ENCODE measurements at regions of chr5 and their contacts with region 1.

Region 1: DNA sequence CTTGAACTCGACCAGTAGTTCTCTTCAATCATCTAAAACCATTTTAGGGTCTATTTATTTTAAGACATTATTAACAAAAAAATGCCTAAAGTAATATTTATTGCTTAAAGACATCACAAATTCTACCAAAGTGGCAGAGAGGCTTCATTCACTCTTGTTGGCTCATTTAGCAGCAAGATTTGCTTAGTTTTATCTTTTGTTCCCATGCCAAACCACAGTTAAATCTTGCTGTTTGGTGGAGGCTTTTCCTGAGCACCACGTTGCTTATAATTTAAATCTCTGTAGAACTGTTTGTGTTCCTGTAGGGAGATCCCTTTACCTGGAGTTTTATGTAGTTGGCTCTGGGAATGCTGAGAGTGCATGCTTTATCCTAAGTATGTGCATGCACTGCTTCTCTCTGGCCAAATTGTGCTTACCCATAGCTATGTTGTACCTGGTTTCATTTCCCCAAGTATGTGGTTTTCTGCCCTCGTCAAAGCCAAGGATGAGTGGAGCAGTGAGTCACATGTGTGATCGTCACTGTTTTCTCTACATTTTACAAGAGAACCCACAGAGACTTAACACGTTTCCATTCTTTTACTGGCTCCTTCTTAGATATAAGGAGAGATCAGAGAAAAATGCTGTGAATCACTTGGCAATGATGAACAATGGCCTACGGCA is 42.1 kb upstream of the MAST4 start:
- DNase-seq: peak; percentile 40
- ATAC-seq: peak; percentile 93
- H3K4me3 Mint-ChIP-seq: peak overlapping the region; percentile 63
- H3K27ac Mint-ChIP-seq: peak overlapping the region; percentile 91
- H3K4me1 Mint-ChIP-seq: peaks cover 42% of the 10 kb centered on the region
- H3K27me3 Mint-ChIP-seq: no peaks in the 10 kb centered on the region
- CTCF ChIP-seq: no peak

Region 2: GRCh38 chr5:66518716-66519171 is 35.3 kb before region 1 on chr5:
- CTCF ChIA-PET with region 1: interaction called, 3 read pairs
- POLR2A ChIA-PET with region 1: interaction called, 8 read pairs
- intact Hi-C with region 1: loop called (anchors 1 kb)
- DNase-seq: no peak
- ATAC-seq: no peak
- H3K4me3 Mint-ChIP-seq: no peak overlapping the region
- H3K27ac Mint-ChIP-seq: no peak overlapping the region
- H3K4me1 Mint-ChIP-seq: peaks cover 39% of the 10 kb centered on the region
- H3K27me3 Mint-ChIP-seq: no peaks in the 10 kb centered on the region
- CTCF ChIP-seq: no peak

Region 3: DNA sequence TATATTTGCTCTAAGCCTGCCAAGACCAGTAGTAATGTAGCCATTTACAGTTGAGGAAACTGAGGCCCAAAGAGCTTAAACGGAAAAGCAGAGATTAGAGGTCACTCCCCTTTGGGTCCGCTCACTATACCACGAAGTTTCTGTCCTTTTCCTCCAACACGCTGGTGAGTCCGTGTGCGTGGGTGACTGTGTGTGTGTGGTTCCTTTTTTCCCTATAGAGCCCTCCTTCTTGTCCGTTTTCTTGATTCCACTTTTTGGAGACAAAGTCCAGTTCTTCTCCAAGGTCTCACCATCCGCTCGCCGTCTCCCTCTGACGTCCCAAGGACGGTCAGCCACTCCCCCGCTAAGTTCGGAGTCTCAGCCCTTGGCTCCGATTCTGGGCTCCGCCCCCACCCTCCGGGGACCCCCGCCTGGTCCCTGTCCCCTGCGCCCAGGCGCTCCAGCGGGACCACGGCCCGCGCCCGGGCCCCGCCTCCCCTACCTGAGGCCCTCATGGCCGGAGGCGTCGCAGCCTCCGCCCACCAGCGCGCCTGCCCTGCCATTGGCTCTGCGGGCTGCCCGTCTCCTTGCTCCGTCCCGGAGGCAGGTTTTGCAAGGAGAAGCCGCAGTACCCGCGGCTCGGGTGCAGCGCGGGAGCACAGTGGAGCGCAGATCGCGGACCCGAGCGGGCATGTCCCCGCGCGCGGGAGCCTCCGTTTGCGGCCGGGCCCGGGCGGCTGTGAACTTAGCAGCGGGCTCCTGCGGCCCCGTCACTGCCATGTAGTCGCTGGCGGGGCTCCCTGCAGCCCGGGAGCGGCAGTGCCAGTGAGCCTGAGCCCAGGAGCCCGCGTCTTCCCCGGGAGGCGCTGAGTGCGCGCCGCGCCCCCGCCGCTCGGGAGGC is 42.0 kb after region 1 on chr5 and contains the start of gene MAST4:
- CTCF ChIA-PET with region 1: no interaction called
- POLR2A ChIA-PET with region 1: no interaction called
- intact Hi-C with region 1: loop called (anchors 2 kb)
- DNase-seq: peak; percentile 79
- ATAC-seq: peak; percentile 96
- H3K4me3 Mint-ChIP-seq: peak within 1 kb of the TSS; percentile 83
- H3K27ac Mint-ChIP-seq: no peak within 1 kb of the TSS
- H3K4me1 Mint-ChIP-seq: peaks cover 22% of the 10 kb centered on the region
- H3K27me3 Mint-ChIP-seq: peaks cover 32% of the 10 kb centered on the region
- CTCF ChIP-seq: no peak
- total RNA-seq, gene MAST4: 10.3 and 17.2 TPM in 2 replicates

Region 4: GRCh38 chr5:66840511-66841013 is 286.5 kb after region 1 on chr5:
- CTCF ChIA-PET with region 1: no interaction called
- POLR2A ChIA-PET with region 1: no interaction called
- intact Hi-C with region 1: loop called (anchors 1 kb)
- DNase-seq: no peak
- ATAC-seq: peak; percentile 92
- H3K4me3 Mint-ChIP-seq: no peak overlapping the region
- H3K27ac Mint-ChIP-seq: no peak overlapping the region
- H3K4me1 Mint-ChIP-seq: peaks cover 16% of the 10 kb centered on the region
- H3K27me3 Mint-ChIP-seq: peaks cover 8% of the 10 kb centered on the region
- CTCF ChIP-seq: no peak

Measured in activated B cell treated with CpG ODN at 0.5 μM for 24 hours (primary cell).